ENCODE measurements at regions of chr11 and their contacts with region 1.

Region 1: DNA sequence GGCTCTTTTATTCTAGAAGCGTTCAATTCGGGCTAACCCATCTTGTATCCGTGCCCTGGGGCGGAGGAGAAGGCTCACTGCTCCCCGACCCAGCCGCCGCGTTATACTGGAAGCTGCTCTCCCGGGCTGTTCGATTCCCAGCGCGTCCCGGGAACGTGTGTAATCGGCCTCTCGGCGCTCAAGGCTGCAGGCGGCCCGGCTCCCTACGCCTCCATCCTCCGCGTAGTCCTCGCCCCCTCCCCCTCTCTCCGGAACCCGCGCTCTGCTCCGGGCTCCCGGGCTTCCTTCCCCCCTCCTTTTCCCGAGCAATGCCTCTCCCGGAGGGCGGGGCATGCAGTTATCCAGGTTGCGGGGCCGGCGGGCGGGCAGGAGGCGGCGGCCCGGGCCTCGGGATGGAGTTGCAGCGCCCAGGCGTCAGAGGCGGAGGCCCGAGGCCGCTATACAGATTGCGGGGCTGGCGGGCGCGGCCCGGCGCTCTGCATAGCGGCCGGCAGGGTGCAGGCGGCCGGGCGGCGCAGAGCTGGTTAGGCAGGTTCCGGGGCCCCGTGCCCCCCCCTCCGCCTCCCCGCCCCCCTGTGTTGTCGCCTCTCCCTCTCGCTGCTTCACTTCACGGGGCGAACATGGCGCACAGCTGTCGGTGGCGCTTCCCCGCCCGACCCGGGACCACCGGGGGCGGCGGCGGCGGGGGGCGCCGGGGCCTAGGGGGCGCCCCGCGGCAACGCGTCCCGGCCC is at the start of gene KMT2A:
- DNase-seq: peak; percentile 99
- ATAC-seq: peak; percentile 91
- total RNA-seq, gene KMT2A: 23.6 TPM

Region 2: GRCh38 chr11:118304568-118305248 is 131.4 kb before region 1 on chr11 and contains the start of gene CD3E:
- intact Hi-C with region 1: no loop called
- DNase-seq: no peak
- ATAC-seq: no peak
- total RNA-seq, gene CD3E: 0.38 TPM

Region 3: GRCh38 chr11:118401151-118401878 is 34.7 kb before region 1 on chr11 and contains the start of gene ATP5MG:
- intact Hi-C with region 1: loop called (anchors 5 kb)
- DNase-seq: peak; percentile 96
- ATAC-seq: peak; percentile 93
- total RNA-seq, gene ATP5MG: 748 TPM

Measured in Right ventricle myocardium superior (tissue), 1 donor.